ENCODE measurements at regions of chr17 and their contacts with region 1.

Region 1: DNA sequence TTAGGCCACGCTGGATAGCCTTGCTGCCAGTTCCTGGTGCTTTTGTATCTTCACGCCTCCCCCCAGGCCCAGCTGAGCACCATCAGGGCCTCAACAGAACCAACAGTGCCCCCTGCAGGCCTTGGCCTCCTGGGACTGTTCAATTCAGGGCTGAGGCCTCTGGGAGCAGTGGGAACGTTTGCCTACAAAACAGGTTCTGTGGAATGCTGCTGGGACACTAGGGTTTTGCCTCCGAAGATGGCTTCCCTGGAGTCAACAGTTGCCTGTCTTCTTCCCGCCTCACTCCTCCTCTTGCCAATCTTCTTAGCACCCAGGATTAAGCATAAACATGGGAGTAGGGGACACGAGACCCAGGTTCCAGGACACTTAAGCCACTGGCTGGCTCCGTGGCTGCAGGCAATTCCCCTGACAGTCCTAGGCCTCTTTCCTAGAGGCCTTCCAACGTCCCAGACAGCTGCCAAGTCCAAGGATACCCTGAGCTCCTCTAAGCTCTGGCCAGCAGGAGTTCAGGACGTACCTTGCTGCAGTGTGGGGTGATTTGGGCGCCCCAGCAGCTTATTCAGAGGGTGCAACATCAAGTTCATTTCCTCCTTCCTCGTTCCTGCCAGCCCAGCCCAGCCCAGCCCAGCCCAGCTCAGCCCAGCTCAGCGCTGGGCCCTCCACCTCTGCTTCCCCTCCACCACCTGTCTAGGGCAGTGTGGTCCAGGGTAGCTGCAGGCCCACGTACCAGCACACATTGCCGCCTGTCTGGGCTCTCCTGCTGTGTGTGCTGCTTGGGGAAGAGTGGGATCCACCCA is 246.6 kb upstream of the RPL38 start:
- DNase-seq: peak; percentile 89
- H3K4me3 ChIP-seq: no peak overlapping the region
- H3K27ac ChIP-seq: no peak overlapping the region
- H3K4me1 ChIP-seq: peaks cover 0 to 6% of the 10 kb centered on the region in 2 experiments; a peak in 1 of 4 replicates
- H3K27me3 ChIP-seq: no peaks in the 10 kb centered on the region
- CTCF ChIP-seq: no peak; the same call in 1 of the 2 replicates
- EP300 ChIP-seq: no peak
- RAD21 ChIP-seq: peak; percentile 82

Region 2: GRCh38 chr17:73586921-73587602 is 369.8 kb before region 1 on chr17:
- CTCF ChIA-PET with region 1: interaction called, 14 read pairs
- POLR2A ChIA-PET with region 1: no interaction called
- DNase-seq: peak; percentile 90
- H3K4me3 ChIP-seq: no peak overlapping the region
- H3K27ac ChIP-seq: no peak overlapping the region
- H3K4me1 ChIP-seq: peaks cover 0 to 30% of the 10 kb centered on the region in 2 experiments; a peak in 2 of 4 replicates
- H3K27me3 ChIP-seq: no peaks in the 10 kb centered on the region
- CTCF ChIP-seq: no peak
- EP300 ChIP-seq: peak in 1 of 2 experiments; percentile 90; a peak in 2 of 4 replicates
- RAD21 ChIP-seq: peak; percentile 49; the same call in 1 of the 2 replicates

Region 3: GRCh38 chr17:73820686-73821448 is 136.0 kb before region 1 on chr17:
- CTCF ChIA-PET with region 1: interaction called, 16 read pairs
- POLR2A ChIA-PET with region 1: no interaction called
- DNase-seq: peak; percentile 85
- H3K4me3 ChIP-seq: no peak overlapping the region
- H3K27ac ChIP-seq: peak overlapping the region in 1 of 2 experiments; percentile 77; a peak in 2 of 4 replicates
- H3K4me1 ChIP-seq: peaks cover 0 to 34% of the 10 kb centered on the region in 2 experiments; a peak in 2 of 4 replicates
- H3K27me3 ChIP-seq: no peaks in the 10 kb centered on the region
- CTCF ChIP-seq: no peak
- EP300 ChIP-seq: peak in 1 of 2 experiments; percentile 89; a peak in 2 of 4 replicates
- RAD21 ChIP-seq: peak; percentile 65

Region 4: DNA sequence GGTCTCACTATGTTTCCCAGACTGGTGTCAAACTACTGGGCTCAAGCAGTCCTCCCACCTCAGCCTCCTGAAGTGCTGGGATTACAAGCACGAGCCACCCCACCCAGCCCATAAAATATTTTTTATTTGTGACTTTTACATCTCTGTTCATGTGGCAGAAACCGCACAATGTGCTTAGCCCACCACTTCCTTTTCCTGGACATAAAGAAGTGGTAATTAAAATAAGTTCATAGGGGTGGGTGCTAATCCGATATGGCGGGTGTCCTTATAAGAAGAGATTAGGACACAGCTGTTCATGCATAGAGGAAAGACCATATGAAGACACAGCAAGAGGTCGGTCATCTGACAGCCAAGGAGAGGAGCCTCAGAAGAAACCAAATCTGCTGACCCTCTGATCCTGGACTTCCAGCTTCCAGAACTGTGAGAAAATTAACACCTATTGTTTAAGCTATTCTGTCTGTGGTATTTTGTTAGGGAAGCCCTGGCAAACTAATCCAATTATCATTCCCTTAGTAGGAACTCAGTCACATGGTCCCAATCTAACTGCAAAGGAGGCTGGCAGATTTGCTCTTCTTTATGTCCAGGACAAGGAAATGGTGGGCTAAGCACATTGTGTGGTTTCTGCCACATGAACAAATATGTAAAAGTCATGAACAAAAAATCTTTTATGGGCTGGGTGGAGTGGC is 32.2 kb before region 1 on chr17:
- CTCF ChIA-PET with region 1: interaction called, 13 read pairs
- POLR2A ChIA-PET with region 1: no interaction called
- DNase-seq: no peak
- H3K4me3 ChIP-seq: no peak overlapping the region
- H3K27ac ChIP-seq: no peak overlapping the region
- H3K4me1 ChIP-seq: no peaks in the 10 kb centered on the region
- H3K27me3 ChIP-seq: no peaks in the 10 kb centered on the region
- CTCF ChIP-seq: no peak
- EP300 ChIP-seq: no peak
- RAD21 ChIP-seq: no peak

Region 5: DNA sequence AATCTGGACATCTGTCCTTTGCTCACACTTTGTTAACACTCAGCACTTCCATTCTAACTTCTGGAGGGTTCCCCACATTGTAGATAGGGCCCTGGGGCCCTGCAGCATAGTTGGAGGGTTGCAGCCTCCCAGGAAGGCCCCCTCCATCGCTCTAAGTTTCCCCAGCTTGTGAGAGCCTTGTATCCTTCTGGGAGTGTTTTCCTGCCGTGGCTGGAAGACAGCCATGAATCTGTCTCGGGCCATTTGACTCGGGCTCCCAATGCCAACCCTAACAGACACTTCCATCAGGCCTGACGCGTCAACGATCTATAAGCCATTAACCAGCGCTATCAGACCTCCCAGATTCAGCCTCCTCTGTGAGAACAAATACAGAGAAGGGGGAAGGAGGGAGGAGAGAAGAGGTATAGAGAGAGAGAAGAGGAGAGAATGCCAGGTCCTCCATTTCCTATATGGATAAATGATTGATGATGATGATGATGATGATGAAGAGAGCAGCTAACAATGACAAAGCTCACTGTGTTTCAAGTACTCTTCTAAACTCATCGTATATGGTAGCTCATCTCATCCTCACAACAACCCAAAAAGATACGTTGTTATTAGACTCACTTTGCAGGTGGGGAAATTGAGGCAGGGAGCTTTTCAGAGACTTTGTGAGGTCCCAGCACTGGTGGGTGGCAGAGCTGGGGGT is 16.9 kb before region 1 on chr17:
- CTCF ChIA-PET with region 1: interaction called, 22 read pairs
- POLR2A ChIA-PET with region 1: no interaction called
- DNase-seq: no peak
- H3K4me3 ChIP-seq: no peak overlapping the region
- H3K27ac ChIP-seq: no peak overlapping the region
- H3K4me1 ChIP-seq: peaks cover 0 to 3% of the 10 kb centered on the region in 2 experiments; a peak in 1 of 4 replicates
- H3K27me3 ChIP-seq: no peaks in the 10 kb centered on the region
- CTCF ChIP-seq: no peak
- EP300 ChIP-seq: no peak
- RAD21 ChIP-seq: no peak

Region 6: DNA sequence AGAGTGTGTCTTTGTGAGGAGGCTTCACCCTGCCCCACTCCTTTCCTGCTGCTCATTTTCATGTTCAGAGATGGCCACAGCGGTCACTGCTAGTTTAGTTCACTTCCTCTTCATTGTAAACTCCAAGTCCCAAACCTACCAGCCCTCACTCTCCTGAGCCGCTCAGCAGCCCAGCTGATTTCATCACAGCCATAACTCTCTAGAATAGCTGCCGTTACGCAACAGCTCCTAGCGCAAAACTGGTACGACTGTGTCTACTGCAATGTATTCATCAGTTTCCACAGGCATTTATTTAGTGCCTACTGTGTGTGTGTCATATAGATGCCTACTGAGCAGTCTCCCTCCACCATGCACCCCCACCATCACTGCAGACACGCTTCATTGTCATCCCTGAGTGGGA is 13.1 kb after region 1 on chr17:
- CTCF ChIA-PET with region 1: interaction called, 37 read pairs
- POLR2A ChIA-PET with region 1: no interaction called
- DNase-seq: no peak
- H3K4me3 ChIP-seq: no peak overlapping the region
- H3K27ac ChIP-seq: no peak overlapping the region
- H3K4me1 ChIP-seq: peaks cover 0 to 19% of the 10 kb centered on the region in 2 experiments; a peak in 1 of 4 replicates
- H3K27me3 ChIP-seq: no peaks in the 10 kb centered on the region
- CTCF ChIP-seq: no peak
- EP300 ChIP-seq: no peak
- RAD21 ChIP-seq: no peak

Region 7: DNA sequence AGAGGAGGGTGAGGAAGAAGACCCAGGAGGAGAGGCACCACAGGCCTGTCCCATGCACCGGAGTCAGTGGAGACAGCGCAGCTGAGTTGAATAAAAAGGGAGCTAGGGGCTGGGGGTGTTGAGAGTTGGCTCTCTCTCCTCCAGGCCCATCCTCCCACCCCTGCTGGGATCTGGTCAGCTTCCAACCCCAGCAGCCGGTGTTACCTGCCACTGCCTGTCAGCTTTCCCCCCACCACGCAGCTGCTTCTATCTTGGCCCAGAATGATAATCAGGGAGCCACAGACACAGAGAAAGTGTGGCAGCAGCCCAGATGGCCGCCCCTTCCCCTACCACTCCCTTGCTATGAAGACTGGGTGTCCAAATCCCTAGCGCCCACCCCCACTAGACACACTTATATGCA is 126.0 kb after region 1 on chr17:
- CTCF ChIA-PET with region 1: no interaction called
- POLR2A ChIA-PET with region 1: no interaction called
- DNase-seq: no peak
- H3K4me3 ChIP-seq: no peak overlapping the region
- H3K27ac ChIP-seq: no peak overlapping the region
- H3K4me1 ChIP-seq: peaks cover 0 to 2% of the 10 kb centered on the region in 2 experiments; a peak in 1 of 4 replicates
- H3K27me3 ChIP-seq: no peaks in the 10 kb centered on the region
- CTCF ChIP-seq: no peak
- EP300 ChIP-seq: no peak
- RAD21 ChIP-seq: no peak

Measured in SK-N-SH (cell line).